H1 (cell line): ENCODE measurements at regions of chr2 and their contacts with region 1.

Region 1: DNA sequence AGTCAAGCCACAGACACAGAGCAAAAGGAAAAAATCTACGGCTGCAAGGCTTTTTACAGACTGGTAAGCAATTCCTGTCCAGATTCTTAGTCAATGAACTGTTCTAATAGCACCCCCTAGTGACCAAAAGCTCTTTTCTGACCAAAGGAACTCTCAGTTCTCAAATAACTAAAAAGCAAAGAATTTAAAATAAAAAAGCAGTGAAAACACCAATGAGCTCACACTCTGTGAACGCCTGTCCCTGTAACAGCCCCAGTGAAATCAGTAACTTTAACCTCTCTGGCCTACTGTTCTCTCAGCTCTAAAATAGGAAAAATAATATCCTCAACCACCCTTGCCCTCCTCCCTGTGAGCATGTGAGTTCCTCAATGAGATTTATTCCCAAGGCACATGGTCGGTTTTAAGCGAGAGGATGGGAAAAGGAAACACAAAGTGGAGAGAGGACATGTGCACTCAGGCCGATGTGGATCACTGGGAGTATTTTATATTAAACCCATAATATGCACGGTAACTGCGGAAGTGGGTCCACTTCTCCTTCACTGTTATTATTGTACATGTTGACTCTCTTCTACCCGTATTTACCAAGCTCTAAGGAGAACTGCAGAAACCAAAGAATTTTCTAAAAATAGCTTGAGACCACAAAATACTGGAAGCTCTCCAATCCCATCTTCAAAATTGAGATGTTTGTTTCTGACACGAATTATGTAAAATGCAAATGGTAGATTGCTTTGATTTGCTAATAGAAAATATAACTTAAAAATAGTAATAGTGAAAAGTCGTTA is 128.5 kb downstream of the STK39 start:
- DNase-seq: peak in 1 of 2 experiments; percentile 52
- H3K4me3 ChIP-seq: no peak overlapping the region
- H3K27ac ChIP-seq: no peak overlapping the region
- H3K4me1 ChIP-seq: peaks cover 0 to 13% (median 7%) of the 10 kb centered on the region in 4 experiments; a peak in 4 of 7 replicates
- H3K27me3 ChIP-seq: no peaks in the 10 kb centered on the region
- CTCF ChIP-seq: peak in 2 of 3 experiments; percentile 58 to 60; a peak in 3 of 4 replicates
- EP300 ChIP-seq: no peak
- POLR2A ChIP-seq: no peak
- RAD21 ChIP-seq: peak; percentile 85 to 89

Region 2: GRCh38 chr2:167844714-167845530 is 274.0 kb before region 1 on chr2:
- CTCF ChIA-PET with region 1: interaction called, 10 read pairs
- POLR2A ChIA-PET with region 1: no interaction called
- DNase-seq: peak; percentile 47 to 75
- H3K4me3 ChIP-seq: no peak overlapping the region
- H3K27ac ChIP-seq: no peak overlapping the region
- H3K4me1 ChIP-seq: no peaks in the 10 kb centered on the region; a peak in 2 of 7 replicates
- H3K27me3 ChIP-seq: no peaks in the 10 kb centered on the region
- CTCF ChIP-seq: peak; percentile 26 to 42 (median 41)
- EP300 ChIP-seq: no peak
- POLR2A ChIP-seq: no peak
- RAD21 ChIP-seq: peak; percentile 35 to 51; a peak in 3 of 4 replicates

Region 3: DNA sequence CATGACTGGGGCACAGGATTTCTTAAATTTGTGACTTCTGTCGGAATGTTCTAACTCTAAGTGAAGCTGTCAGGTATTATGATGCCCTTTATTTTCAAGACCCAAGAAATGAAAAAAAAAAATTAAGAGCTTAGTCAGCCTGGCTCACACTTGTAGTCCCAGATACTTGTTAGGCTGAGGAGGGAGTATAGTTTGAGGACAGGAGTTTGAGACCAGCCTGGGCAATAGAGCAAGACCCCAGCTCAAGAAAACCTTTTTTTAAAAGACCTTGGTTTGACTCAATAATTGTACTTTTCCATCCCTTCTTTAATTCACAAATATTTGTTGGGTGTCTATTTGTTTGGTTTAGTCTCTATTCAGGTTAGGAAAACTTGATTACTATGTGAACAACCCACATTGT is 181.5 kb before region 1 on chr2:
- CTCF ChIA-PET with region 1: interaction called, 12 read pairs
- POLR2A ChIA-PET with region 1: no interaction called
- DNase-seq: no peak
- H3K4me3 ChIP-seq: no peak overlapping the region
- H3K27ac ChIP-seq: no peak overlapping the region
- H3K4me1 ChIP-seq: no peaks in the 10 kb centered on the region; a peak in 1 of 7 replicates
- H3K27me3 ChIP-seq: no peaks in the 10 kb centered on the region
- CTCF ChIP-seq: no peak
- EP300 ChIP-seq: no peak
- POLR2A ChIP-seq: no peak
- RAD21 ChIP-seq: no peak

Region 4: DNA sequence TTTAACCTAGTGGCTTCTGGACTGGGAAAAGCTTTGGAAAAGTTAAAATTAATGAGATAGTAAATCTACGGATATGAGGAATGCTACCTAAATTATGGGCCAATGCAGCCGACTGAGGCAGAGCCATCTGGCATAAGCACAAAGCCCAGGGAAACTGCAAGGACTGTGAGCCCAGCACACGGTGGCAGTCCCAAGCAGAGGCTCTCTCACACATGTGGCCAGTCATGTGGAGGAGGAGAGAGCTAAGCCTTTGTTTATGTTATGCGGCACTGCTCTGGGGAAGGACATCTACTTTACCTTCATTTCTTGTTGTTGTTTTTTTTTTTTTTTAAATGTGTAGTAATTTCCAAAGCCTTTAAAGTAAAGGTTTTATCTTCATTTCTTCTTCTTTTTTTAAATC is 138.5 kb before region 1 on chr2:
- CTCF ChIA-PET with region 1: interaction called, 14 read pairs
- POLR2A ChIA-PET with region 1: no interaction called
- DNase-seq: no peak
- H3K4me3 ChIP-seq: no peak overlapping the region
- H3K27ac ChIP-seq: no peak overlapping the region
- H3K4me1 ChIP-seq: peaks cover 0 to 4% (median 0%) of the 10 kb centered on the region in 4 experiments; a peak in 1 of 7 replicates
- H3K27me3 ChIP-seq: no peaks in the 10 kb centered on the region
- CTCF ChIP-seq: no peak
- EP300 ChIP-seq: no peak
- POLR2A ChIP-seq: no peak
- RAD21 ChIP-seq: no peak

Region 5: DNA sequence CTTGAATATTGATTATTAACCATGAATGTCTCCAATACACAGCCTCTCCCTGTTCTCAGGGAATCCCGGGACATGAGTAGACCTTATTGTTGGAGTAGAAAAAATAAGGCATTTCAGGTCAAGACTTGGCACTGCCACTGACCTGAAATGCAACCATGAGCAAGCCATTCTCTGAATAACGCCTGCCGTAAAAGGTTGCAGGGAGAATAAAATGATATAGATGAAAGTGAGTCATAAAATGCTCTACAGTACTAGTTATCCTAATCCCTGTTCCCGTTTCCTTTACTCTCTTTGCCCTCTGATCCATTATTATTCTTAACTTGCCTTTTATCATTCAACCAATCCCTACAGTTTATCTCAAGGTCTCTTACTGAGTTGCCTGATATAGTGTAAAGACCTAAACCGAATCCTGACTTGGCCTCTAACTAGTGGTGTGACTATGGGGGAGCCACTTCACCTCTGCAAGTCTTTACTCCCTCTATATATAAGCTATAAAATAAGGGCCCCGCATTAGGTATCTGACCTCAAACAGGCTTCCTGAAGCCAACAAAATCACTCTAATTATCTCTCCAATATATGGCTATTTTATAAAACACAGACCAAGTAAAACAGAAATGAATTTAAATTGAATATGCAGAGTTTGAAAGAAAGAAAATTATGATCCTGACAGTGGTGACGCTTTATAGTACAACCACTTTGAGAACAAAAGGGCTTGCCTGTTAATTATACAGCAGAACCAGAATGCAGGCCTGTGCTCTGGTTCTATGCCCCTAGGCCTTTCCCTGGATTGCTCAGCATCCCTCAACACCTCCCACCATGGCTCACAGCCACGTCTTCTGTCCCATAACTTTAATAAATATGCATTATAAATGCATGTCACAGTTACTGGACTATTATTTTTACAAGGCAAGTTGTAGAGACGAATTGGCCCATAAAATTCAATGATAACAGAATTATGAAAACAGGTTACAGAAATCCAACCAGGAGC is 54.6 kb before region 1 on chr2:
- CTCF ChIA-PET with region 1: interaction called, 10 read pairs
- POLR2A ChIA-PET with region 1: no interaction called
- DNase-seq: no peak
- H3K4me3 ChIP-seq: no peak overlapping the region
- H3K27ac ChIP-seq: no peak overlapping the region
- H3K4me1 ChIP-seq: 0 out of 7 replicates have a peak, but pooled peaks cover 0 to 2% (median 0%) of the 10 kb centered on the region in 4 experiments
- H3K27me3 ChIP-seq: no peaks in the 10 kb centered on the region
- CTCF ChIP-seq: no peak
- EP300 ChIP-seq: no peak
- POLR2A ChIP-seq: no peak
- RAD21 ChIP-seq: no peak

Region 6: GRCh38 chr2:168107322-168107721 is 11.6 kb before region 1 on chr2:
- CTCF ChIA-PET with region 1: interaction called, 95 read pairs
- POLR2A ChIA-PET with region 1: no interaction called
- DNase-seq: no peak
- H3K4me3 ChIP-seq: no peak overlapping the region
- H3K27ac ChIP-seq: no peak overlapping the region
- H3K4me1 ChIP-seq: no peaks in the 10 kb centered on the region
- H3K27me3 ChIP-seq: no peaks in the 10 kb centered on the region
- CTCF ChIP-seq: no peak
- EP300 ChIP-seq: no peak
- POLR2A ChIP-seq: no peak
- RAD21 ChIP-seq: no peak

Region 7: DNA sequence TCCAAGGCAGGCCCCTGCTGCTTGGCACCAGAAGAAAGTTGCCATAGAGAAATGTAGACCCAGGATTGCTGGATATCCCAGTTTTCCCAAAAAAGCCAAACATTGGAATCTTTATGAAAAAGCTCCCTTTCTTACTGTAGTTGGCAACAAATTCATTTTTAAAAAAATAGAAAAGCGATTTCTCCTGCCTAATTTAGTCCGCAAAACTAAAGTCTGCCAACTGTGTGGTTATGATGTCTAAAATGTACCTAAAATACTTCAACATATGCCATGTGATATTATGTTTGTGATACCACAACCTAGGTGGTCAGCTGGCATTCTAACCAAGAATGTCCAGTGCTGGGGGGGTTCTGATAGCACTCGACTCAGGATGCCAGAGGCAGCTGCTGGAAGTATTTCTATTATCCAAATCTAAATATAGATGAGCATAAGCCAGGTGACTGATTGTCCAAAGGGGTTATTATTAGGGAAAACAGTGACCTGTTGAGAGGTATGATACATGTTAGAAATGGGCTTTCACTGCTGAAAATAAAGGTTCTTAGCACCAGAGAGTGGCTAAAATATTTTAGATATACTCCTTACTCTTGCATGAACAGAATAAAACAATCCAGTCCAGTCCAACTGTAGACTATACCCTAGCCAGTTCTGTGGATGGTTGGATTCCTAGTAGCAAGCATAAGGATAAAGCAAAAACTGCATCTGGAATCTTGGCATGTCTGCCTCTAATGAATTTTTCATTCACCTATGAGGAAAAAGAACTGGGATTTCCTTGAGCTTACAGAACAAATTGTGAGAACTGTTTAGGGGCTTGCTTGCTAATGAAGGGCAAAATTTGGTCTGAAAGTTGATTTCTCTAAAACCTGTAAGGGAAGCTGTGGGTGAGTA is 26.7 kb after region 1 on chr2:
- CTCF ChIA-PET with region 1: interaction called, 16 read pairs
- POLR2A ChIA-PET with region 1: no interaction called
- DNase-seq: no peak
- H3K4me3 ChIP-seq: no peak overlapping the region
- H3K27ac ChIP-seq: no peak overlapping the region
- H3K4me1 ChIP-seq: peaks cover 0 to 3% (median 2%) of the 10 kb centered on the region in 4 experiments; a peak in 2 of 7 replicates
- H3K27me3 ChIP-seq: no peaks in the 10 kb centered on the region
- CTCF ChIP-seq: no peak
- EP300 ChIP-seq: no peak
- POLR2A ChIP-seq: no peak
- RAD21 ChIP-seq: no peak

Region 8: DNA sequence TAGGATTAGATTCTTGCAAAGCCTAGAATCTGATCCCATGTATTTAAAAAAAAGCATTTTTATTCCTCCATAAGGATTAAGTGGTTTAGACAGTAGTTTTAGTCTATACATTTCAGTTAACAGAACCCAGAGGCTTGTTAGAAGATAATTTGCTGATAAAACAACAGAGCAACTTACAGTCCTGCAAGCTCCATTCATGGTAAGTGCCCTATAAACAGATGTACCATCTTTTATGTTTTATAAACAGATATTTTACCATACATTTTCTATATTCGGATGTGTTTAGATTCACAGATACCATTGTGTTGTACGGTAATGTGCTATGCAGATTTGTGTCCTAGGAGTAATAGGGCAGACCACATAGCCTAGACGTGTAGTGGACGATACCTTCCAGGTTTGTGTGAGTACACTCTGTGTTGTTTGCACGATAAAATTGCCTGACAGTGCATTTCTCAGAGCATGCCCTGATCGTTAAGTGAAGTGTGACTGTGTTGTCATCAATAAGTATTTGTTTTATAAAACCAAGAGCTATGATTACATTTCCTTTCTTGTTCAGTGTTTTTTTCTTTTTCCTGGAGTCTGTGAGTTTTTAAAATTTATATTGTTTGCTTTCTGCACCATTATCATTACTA is 391.3 kb after region 1 on chr2:
- CTCF ChIA-PET with region 1: no interaction called
- POLR2A ChIA-PET with region 1: no interaction called
- DNase-seq: no peak
- H3K4me3 ChIP-seq: no peak overlapping the region
- H3K27ac ChIP-seq: no peak overlapping the region
- H3K4me1 ChIP-seq: peaks cover 0 to 5% (median 0%) of the 10 kb centered on the region in 4 experiments; a peak in 1 of 7 replicates
- H3K27me3 ChIP-seq: no peaks in the 10 kb centered on the region
- CTCF ChIP-seq: no peak
- EP300 ChIP-seq: no peak
- POLR2A ChIP-seq: no peak
- RAD21 ChIP-seq: no peak

Region 9: DNA sequence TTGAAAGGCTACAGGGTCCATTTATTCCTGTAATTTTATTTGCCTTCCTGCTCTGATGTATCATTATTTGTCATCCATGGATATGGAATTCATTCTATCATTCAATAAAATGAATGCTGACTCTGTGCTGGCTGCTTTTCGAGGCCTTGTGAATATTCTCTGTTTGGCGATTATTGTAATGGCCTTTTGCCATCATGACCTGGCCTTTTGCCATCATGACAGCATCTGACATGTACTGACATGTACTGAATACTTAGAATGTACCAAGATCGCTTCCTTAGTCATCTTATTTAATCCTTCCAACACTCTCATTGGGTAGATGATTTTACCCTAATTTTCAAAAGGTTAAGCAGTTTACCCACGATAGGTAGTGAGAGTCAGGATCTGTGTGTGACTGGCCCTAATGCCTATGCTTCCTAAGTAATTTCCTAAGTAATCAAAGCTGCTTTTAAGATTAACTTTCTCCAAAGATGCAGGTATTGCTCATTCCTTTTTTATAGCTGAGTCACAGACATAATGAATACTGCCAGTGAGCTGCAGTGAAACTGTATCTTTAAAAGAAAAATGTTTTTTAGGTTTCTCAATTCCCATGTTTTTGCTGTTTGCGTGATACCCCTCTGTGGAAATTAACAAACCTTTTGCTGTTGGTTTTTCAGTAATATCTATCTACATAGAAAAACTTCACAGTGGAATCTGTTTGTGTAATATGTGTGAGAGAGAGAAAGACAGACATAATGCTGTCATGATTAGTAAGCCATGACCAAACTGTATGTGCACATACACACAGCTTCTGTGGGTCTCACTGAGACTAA is 465.0 kb after region 1 on chr2:
- CTCF ChIA-PET with region 1: no interaction called
- POLR2A ChIA-PET with region 1: no interaction called
- DNase-seq: no peak
- H3K4me3 ChIP-seq: no peak overlapping the region
- H3K27ac ChIP-seq: no peak overlapping the region
- H3K4me1 ChIP-seq: peaks cover 0 to 4% (median 3%) of the 10 kb centered on the region in 4 experiments; a peak in 2 of 7 replicates
- H3K27me3 ChIP-seq: no peaks in the 10 kb centered on the region
- CTCF ChIP-seq: no peak
- EP300 ChIP-seq: no peak
- POLR2A ChIP-seq: no peak
- RAD21 ChIP-seq: no peak